AG04449 (cell line): ENCODE measurements at regions of chr1 and their contacts with region 1.

Region 1: GRCh38 chr1:159798893-159799292 is 3.3 kb upstream of the FCRL6 start:
- DNase-seq: no peak
- H3K4me3 ChIP-seq: no peak overlapping the region
- CTCF ChIP-seq: peak; percentile 55

Region 2: DNA sequence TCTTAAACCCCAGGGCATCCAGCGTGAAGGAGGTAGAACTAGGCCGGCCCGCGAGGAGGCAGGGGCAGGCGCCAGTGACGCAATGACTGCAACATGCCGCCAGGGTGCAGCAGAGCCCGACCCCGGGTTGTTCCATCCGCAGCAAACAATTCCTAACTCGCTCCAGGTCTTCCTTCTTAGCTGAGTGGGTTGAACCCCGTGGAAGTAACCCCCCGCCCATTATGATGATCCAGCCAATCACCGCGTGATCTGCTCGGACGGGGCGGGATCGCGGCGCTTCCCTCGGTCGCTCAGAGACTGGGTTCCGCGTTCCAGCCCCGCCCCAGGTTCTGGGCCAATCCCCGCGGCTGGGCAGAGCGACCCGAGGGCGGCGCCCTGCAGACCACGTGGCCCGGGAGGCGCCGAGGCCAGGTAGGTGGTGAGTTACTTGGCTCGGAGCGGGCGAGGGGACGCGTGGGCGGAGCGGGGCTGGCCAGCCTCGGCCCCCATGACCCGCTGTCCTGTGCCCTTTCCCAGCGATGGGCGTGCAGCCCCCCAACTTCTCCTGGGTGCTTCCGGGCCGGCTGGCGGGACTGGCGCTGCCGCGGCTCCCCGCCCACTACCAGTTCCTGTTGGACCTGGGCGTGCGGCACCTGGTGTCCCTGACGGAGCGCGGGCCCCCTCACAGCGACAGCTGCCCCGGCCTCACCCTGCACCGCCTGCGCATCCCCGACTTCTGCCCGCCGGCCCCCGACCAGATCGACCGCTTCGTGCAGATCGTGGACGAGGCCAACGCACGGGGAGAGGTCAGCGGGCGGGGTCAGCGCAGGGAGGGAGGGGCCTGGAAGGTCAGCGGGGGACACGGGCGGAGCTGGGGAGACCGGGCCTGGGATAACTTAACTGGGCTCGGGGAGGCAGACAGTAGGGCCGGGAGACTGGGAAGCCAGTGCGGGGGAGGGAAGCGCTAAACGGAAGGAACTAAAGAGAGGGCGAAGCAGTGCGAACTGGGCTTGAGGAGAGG is 18.0 kb before region 1 on chr1 and contains the start of gene DUSP23:
- CTCF ChIA-PET with region 1: interaction called, 79 read pairs
- POLR2A ChIA-PET with region 1: no interaction called
- DNase-seq: peak; percentile 92
- H3K4me3 ChIP-seq: peak within 1 kb of the TSS; percentile 85
- CTCF ChIP-seq: peak; percentile 96

Region 3: GRCh38 chr1:159839116-159839849 is 40.4 kb after region 1 on chr1:
- CTCF ChIA-PET with region 1: interaction called, 143 read pairs
- POLR2A ChIA-PET with region 1: no interaction called
- DNase-seq: no peak
- H3K4me3 ChIP-seq: no peak overlapping the region
- CTCF ChIP-seq: no peak

Region 4: DNA sequence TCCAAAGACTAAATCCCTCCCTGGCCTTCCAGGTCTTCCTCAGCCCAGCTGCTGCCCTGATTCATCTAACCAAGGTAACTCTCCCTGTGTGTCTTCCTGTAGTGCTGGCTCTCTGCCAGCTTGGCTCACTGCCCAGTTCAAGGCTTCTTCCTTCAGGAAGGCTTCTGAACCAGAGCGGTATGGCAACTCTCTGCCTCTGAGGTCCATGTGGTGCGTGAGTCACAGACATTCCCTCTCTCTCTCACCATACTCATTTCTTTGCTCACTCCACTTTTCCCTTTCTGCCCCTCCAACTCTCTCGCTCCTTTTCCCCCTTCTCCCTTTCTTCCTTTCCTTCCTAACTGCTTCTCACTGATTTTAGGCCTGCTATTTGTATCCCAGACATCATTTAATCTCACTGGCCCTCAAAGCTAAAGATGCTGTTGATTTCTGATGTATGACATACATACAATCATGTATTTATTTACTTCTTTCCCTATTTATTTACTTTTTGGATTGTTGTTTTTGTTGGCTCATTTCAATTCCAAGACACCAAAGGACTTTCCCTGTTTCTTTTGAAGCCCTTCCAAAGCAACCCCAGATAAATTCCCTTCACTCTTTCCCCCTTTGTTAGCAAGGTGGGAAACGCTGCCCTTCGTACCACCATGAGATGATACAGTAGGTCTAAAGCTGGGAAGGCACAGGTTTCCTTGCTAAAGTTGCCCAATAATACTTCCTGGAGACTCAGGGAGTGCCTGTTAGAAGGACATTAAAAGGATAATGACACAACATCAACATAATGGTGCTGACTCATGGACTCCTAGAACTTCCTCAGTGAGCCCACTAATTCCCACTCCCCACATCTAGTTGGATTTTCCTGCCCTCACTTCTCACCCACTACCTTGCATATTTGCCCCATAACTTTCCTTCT is 83.3 kb after region 1 on chr1:
- CTCF ChIA-PET with region 1: interaction called, 1,007 read pairs
- POLR2A ChIA-PET with region 1: interaction called, 3 read pairs
- DNase-seq: peak; percentile 83
- H3K4me3 ChIP-seq: no peak overlapping the region
- CTCF ChIP-seq: no peak

Region 5: GRCh38 chr1:159908031-159908940 is 109.4 kb after region 1 on chr1:
- CTCF ChIA-PET with region 1: interaction called, 11 read pairs
- POLR2A ChIA-PET with region 1: no interaction called
- DNase-seq: no peak
- H3K4me3 ChIP-seq: no peak overlapping the region
- CTCF ChIP-seq: no peak

Region 6: DNA sequence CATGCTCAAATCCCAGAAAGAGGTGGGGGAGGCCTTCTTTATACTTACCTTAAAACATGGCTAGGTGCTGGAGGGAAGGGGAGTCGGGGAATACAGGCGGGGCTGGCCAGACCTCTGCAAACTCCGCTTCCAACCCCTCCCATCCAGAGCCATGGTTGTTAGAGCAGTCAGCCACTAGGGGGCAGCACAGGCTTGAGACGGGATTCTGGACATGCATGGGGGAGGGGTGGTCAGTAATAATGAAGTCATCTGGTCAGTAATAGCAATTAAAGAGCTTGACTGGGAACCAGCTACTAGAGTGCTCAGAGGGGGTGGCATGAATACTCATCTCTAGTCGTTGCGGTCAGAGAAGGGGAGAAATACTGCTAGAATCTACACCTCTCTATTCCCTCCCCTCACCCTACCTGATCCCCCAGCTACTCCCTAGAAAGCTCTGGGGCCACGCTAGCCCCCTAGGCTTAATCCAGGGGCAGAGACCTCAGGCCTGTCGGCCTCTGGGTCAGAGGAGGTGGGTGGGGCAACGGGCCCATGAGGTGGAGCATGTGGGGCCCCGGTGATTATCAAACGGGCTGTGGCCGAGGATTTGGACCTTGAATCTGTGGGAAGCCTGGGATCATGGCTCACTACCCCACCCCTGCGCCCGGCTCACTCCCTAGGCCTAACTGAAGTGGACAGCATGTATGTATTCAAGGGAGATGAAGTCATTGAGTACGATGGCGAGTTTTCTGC is 394.4 kb after region 1 on chr1:
- CTCF ChIA-PET with region 1: no interaction called
- POLR2A ChIA-PET with region 1: no interaction called
- DNase-seq: peak; percentile 33
- H3K4me3 ChIP-seq: no peak overlapping the region
- CTCF ChIP-seq: peak; percentile 99

Region 7: DNA sequence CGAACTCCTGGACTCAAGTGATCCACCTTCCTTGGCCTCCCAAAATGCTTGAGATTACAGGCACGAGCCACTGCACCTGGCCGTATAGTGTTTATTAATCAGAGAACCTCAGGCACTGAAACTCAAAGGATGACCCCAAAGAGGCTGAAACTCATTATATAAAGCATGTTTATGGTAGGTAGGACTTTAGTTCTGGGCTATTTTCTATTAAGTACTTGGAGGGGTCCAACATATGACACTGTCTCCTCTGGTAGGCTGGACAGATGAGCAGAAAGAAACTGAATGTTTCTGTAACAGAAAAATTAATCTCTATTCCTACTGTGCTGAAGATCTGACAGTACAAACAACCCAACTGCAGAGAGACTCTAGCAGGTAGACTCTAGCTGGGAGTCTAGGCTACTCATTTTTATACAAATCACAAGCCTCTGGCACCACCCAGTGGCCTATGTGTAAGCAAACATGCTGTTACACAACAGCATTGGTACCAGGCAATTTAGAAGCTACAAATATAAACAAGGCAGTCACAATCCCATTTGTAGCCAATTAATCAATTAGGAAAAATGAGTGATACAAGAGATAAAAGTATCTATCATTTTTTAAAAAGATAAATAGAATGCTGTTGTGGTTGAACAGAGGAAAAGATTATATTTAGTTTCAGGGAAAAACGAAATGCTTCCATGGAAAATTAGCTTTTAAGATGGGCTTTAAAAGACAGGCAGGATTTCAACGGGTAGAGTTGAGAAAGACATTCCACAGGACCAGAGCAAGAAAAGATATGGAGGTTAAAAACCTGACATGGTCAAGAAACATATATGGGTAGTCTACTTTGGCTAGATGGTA is 453.0 kb after region 1 on chr1:
- CTCF ChIA-PET with region 1: no interaction called
- POLR2A ChIA-PET with region 1: no interaction called
- DNase-seq: no peak
- H3K4me3 ChIP-seq: no peak overlapping the region
- CTCF ChIP-seq: peak; percentile 54